ENCODE measurements at regions of chr13 and their contacts with region 1.

Region 1: DNA sequence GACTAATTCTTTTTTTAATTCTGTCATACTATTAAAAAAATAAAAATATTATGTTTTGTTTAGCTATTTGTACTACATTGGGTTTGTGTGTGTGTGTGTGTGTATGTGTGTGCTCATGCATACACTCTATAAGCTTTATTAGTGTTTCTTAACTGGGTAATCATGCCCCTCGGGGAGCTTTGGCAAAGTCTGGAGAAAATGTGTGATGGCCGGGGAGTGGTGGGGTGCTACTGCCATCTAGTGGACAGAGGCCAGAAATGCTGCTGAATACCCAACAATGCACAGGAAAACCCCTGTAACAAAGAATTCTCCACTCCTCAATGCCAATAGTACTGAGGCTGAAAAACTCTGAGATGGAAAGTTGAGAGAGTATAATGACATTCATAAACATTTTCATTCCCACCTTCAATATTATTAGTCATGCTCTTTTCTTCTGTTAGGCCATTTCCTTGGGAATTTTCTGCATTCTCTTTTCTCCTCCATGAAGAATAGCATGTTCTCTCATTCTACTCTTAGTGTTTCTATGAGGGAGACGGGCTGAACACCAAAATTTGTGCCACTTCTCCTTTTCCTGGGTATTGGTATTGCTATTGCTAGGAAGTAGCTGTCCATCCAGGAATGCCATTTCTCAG is 157.3 kb downstream of the DNAJC3 start:
- DNase-seq: peak; percentile 68
- ATAC-seq: no peak
- H3K4me3 Mint-ChIP-seq: no peak overlapping the region
- H3K27ac Mint-ChIP-seq: no peak overlapping the region
- H3K4me1 Mint-ChIP-seq: no peaks in the 10 kb centered on the region
- H3K27me3 Mint-ChIP-seq: peaks cover 18% of the 10 kb centered on the region

Region 2: DNA sequence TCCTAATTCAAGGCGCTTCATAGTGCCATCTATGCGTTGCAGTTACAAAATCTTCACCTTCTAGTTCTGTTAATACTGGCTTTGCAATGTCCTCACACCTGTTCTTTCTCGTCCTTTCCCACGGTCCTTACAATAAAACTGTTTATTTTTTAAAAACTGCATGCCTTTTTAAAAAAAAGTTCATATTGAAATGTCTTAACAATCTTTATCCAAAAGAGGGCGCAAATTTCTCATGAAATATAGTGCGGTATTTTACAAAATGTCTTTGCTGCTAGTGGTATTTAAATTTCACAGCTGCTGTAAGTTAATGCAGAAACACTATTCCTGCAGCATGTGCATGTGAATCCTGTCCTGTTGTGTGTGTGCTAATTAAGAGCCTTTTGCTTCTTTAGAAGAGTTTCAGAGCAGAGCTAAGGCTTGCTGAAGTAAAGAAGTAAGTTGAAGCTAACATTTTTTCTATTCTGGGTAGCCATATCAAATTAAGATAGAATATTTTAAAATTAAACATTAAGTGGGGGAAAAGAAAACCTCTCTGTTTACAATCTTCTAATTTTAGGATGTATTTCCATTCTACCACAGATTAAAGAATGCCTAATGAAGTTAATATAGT is 297.5 kb before region 1 on chr13:
- CTCF ChIA-PET with region 1: interaction called, 18 read pairs
- DNase-seq: no peak
- ATAC-seq: no peak
- H3K4me3 Mint-ChIP-seq: no peak overlapping the region
- H3K27ac Mint-ChIP-seq: no peak overlapping the region
- H3K4me1 Mint-ChIP-seq: no peaks in the 10 kb centered on the region
- H3K27me3 Mint-ChIP-seq: peaks cover 26% of the 10 kb centered on the region

Region 3: GRCh38 chr13:95624020-95624419 is 210.2 kb before region 1 on chr13:
- CTCF ChIA-PET with region 1: interaction called, 53 read pairs
- DNase-seq: no peak
- ATAC-seq: no peak
- H3K4me3 Mint-ChIP-seq: no peak overlapping the region
- H3K27ac Mint-ChIP-seq: no peak overlapping the region
- H3K4me1 Mint-ChIP-seq: no peaks in the 10 kb centered on the region
- H3K27me3 Mint-ChIP-seq: peaks cover 23% of the 10 kb centered on the region

Region 4: GRCh38 chr13:95822303-95822702 is 11.9 kb before region 1 on chr13:
- CTCF ChIA-PET with region 1: interaction called, 15 read pairs
- DNase-seq: no peak
- ATAC-seq: no peak
- H3K4me3 Mint-ChIP-seq: no peak overlapping the region
- H3K27ac Mint-ChIP-seq: no peak overlapping the region
- H3K4me1 Mint-ChIP-seq: no peaks in the 10 kb centered on the region
- H3K27me3 Mint-ChIP-seq: peaks cover 37% of the 10 kb centered on the region

Region 5: DNA sequence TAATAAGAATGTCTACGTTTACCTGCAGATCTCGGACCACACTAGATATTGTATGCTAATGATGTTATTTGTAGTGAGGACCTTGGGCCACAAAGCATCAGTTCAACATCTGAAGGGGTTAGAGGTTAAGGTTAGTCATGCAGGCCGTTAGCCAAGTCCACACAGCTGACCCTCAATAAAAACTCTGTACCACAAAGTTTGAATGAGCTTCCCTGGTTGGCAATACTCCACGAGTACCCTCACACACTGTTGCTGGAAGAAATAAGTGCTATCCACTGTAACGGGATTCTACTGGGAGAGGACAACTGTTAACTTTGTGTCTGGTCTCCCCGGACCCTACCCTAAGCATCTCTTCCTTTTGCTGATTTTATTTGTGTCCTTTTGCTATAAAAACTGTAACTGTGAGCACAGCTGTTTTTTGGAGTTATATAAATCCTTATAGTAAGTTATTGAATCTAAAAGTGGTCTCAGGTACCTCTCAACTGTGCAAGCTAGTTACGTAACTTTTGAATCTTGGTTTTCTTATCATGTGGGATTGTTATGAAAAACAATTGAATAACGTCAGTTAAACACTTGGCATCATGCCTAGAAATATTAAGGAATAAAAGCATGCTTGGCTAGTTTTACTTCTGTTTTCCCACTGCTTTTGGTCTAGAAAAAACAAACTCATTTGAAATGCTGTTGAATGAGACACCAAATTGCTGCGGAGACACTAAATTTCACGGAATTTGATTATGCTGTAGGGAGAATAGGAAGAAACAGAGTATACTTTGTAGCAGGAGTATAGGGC is 24.2 kb after region 1 on chr13:
- CTCF ChIA-PET with region 1: no interaction called
- DNase-seq: no peak
- ATAC-seq: no peak
- H3K4me3 Mint-ChIP-seq: no peak overlapping the region
- H3K27ac Mint-ChIP-seq: no peak overlapping the region
- H3K4me1 Mint-ChIP-seq: no peaks in the 10 kb centered on the region
- H3K27me3 Mint-ChIP-seq: peaks cover 2% of the 10 kb centered on the region